ENCODE measurements at regions of chr13 and their contacts with region 1.

Region 1: DNA sequence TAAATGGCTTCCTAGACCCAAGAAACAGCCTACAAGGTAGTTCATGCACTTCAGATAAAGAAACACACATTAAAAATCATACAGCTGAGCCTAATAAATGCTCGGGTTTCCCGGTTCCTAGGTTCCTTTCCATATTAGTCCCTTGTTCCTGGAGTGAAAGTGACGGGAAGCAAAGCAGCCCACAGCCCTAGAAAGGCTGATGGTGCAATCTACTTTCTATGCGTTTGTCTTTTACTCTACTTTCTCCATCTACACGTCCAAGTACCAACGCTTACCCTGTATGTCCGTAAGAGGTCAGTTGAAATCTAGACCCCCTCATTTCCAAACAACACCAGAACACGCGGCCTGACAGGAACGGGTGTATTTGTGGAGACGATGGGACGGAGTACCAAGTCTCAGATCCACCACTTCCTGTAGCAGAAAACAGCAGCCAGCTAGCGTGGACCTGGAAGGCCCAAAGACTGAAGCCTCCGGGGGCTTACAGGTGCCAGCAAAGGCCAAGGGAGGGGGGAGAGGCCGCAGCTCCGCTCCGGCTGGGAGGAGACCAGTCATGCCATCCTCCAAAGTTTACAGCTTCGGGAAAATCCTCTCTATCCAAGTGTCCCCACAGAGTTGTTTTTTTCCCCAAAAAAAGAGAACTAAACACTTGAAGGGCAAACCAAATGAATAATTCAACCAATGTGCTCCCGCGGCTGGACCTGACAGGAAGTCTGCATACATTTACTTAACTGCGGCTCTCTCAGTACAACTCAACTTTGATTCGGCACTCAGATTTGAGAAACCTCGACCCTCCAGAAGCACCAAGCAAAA is 34.1 kb downstream of the STK24 start:
- DNase-seq: no peak
- H3K4me3 Mint-ChIP-seq: peak overlapping the region; percentile 68
- H3K27ac Mint-ChIP-seq: peak overlapping the region; percentile 82
- H3K4me1 Mint-ChIP-seq: peaks cover 74% of the 10 kb centered on the region
- H3K27me3 Mint-ChIP-seq: no peaks in the 10 kb centered on the region

Region 2: GRCh38 chr13:98563069-98563468 is 20.3 kb after region 1 on chr13:
- intact Hi-C with region 1: loop called (anchors 2 kb)
- DNase-seq: peak; percentile 43
- H3K4me3 Mint-ChIP-seq: peak overlapping the region; percentile 85
- H3K27ac Mint-ChIP-seq: peak overlapping the region; percentile 79
- H3K4me1 Mint-ChIP-seq: peaks cover 79% of the 10 kb centered on the region
- H3K27me3 Mint-ChIP-seq: no peaks in the 10 kb centered on the region

Region 3: GRCh38 chr13:98570929-98571372 is 28.2 kb after region 1 on chr13:
- intact Hi-C with region 1: loop called (anchors 2 kb)
- DNase-seq: peak; percentile 53
- H3K4me3 Mint-ChIP-seq: peak overlapping the region; percentile 73
- H3K27ac Mint-ChIP-seq: peak overlapping the region; percentile 83
- H3K4me1 Mint-ChIP-seq: peaks cover 83% of the 10 kb centered on the region
- H3K27me3 Mint-ChIP-seq: no peaks in the 10 kb centered on the region

Measured in activated T-helper 2 cell treated with anti-CD3 and anti-CD28 coated beads, Interferon-gamma antibody, Interleukin-2, Interleukin-4, amounts not matched to agents 10 μg/mL and 5 μg/mL and 100 μg/mL, durations not matched to agents 14 hours and 24 hours and 36 hours (primary cell).